ENCODE measurements at regions of chr2 and their contacts with region 1.

Region 1: DNA sequence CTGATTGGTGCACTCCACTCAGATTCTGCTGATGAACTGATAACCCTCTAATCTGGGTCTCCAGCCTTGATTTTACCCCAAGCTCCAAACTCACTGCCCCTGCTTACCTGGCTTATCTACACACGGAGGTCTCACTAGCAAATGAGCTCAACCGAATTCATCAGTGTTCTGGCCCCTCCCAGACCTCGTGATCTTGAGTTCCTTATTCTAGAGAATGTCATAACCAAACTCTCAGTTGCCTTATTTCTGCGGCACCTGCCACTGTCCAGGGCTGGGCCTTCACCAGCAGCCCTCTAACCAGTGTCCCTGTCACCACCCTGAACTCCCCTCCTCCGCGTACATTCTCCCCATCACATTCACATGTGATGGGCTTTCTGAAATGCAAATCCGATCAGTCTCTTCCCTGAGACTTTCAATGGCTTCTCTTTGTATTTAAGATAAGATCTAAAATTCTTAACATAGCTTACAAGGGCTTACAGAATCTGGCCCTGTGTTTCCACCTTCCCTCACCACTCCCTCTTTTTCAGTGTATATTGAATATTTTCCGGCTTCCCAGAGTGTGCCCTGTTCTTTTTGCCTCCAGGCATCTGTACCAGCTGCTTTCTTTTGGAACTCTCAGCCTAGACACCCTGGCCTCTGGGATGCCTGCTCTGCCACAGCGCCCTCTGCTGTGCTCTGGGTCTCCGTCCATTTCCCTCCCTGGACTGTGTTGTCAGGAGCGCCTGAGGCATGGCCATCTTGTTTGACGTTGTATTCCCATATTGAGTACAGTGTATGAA is 31.1 kb downstream of the NAB1 start:
- DNase-seq: peak; percentile 57
- H3K4me3 Mint-ChIP-seq: peak overlapping the region; percentile 8
- H3K27ac Mint-ChIP-seq: peak overlapping the region; percentile 56
- H3K4me1 Mint-ChIP-seq: peaks cover 43% of the 10 kb centered on the region
- H3K27me3 Mint-ChIP-seq: no peaks in the 10 kb centered on the region

Region 2: GRCh38 chr2:190382851-190383250 is 297.2 kb before region 1 on chr2:
- CTCF ChIA-PET with region 1: interaction called, 25 read pairs
- POLR2A ChIA-PET with region 1: no interaction called
- DNase-seq: peak; percentile 30
- H3K4me3 Mint-ChIP-seq: no peak overlapping the region
- H3K27ac Mint-ChIP-seq: no peak overlapping the region
- H3K4me1 Mint-ChIP-seq: no peaks in the 10 kb centered on the region
- H3K27me3 Mint-ChIP-seq: no peaks in the 10 kb centered on the region

Region 3: DNA sequence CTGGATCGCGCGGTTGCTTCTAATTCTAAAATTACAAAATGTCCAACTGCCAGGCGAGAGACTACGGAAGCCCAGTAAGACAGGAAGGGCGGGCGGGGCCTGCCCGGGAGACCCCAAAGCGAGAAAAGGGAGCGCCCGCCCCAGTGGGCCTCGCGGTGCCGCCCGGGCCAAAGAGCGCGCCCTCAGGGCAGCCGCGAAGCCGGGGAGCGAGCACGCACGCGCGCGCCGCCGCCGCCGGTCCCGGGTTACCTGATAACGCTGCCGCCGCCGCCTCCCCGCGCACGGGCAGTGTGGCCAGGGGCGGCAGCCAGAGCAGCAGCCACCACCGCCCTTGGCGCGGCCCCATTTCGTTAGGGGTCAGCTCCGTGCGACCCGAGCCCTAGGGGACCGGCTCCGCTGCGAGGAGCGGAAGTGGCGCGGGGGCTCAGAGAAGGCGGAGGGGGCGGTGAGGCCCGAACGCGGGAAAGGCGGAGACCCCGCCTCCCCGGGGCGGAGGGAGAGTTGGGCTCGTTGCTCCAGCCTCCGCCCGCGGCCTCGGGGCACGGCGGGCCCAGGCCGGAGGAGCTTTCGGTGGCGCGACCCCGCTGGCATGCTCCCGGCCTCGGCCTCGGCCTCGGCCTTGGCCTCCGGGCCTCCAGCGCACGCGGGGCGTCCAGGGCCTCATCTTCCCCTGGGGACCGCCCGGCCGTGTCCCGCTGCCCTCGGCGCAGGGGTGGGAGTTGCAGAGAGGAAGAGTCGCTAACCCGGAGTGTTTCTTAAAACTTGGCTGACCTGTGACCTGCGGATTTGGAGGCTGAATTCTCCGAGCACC is 145.5 kb before region 1 on chr2 and contains the start of gene NEMP2:
- CTCF ChIA-PET with region 1: interaction called, 9 read pairs
- POLR2A ChIA-PET with region 1: interaction called, 24 read pairs
- DNase-seq: peak; percentile 83
- H3K4me3 Mint-ChIP-seq: peak within 1 kb of the TSS; percentile 89
- H3K27ac Mint-ChIP-seq: peak within 1 kb of the TSS; percentile 99
- H3K4me1 Mint-ChIP-seq: peaks cover 55% of the 10 kb centered on the region
- H3K27me3 Mint-ChIP-seq: no peaks in the 10 kb centered on the region
- total RNA-seq, gene NEMP2: 18.9 to 19.1 TPM

Region 4: GRCh38 chr2:190648289-190649034 is 31.5 kb before region 1 on chr2:
- CTCF ChIA-PET with region 1: interaction called, 23 read pairs
- POLR2A ChIA-PET with region 1: interaction called, 8 read pairs
- DNase-seq: peak; percentile 81
- H3K4me3 Mint-ChIP-seq: peak overlapping the region; percentile 73
- H3K27ac Mint-ChIP-seq: peak overlapping the region; percentile 29
- H3K4me1 Mint-ChIP-seq: peaks cover 31% of the 10 kb centered on the region
- H3K27me3 Mint-ChIP-seq: peaks cover 2% of the 10 kb centered on the region

Region 5: DNA sequence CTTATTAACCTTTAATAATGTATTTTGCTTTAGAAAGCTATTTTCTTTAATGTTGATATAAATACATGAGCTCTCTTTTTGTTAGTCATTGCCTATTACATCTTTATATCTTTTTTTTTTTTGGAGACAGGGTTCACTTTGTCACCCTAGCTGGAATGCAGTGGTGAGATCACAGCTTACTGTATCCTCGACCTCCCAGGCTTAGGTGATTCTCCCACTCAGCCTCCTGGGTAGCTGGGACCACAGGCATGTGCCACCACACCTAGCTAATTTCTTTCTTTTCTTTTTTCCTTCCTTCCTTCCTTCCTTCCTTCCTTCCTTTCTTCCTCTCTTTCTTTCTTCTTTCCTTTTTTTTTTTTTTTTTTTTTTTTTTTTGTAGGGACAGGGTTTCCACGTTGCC is 15.8 kb before region 1 on chr2:
- CTCF ChIA-PET with region 1: interaction called, 16 read pairs
- POLR2A ChIA-PET with region 1: interaction called, 6 read pairs
- DNase-seq: no peak
- H3K4me3 Mint-ChIP-seq: no peak overlapping the region
- H3K27ac Mint-ChIP-seq: no peak overlapping the region
- H3K4me1 Mint-ChIP-seq: peaks cover 19% of the 10 kb centered on the region
- H3K27me3 Mint-ChIP-seq: no peaks in the 10 kb centered on the region

Region 6: DNA sequence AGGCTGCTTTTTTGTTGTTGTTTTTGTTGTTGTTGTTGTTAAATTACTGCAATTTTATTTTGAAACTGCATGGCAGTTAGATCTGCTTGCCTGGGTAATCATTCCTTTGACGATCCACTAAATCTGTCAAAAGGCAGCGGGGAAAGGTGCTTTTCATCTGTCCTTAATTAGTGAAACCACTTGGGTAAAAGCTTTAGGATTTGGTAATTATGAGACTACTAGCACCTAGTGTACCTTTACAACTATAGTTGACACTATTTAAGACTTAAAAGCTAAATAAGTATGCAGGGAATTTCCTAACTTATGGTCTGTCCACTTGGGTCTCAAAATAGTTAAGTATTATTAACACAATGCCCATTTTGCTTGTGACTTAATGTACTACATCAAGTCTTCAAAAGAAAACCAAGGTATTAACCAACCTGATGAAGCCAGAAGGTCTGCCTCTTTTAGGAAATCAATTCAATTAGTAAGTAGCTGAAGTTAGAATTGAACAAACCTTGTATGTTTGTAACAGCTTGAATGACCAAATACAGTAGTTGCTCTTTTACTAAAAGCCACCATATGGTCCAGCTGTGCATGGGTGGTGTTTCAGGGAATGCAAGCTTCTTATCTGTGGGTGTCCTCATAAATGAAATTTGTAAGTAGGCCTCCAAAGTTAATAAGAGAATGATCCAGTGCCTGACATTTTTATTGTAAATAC is 13.7 kb after region 1 on chr2:
- CTCF ChIA-PET with region 1: interaction called, 29 read pairs
- POLR2A ChIA-PET with region 1: interaction called, 4 read pairs
- DNase-seq: no peak
- H3K4me3 Mint-ChIP-seq: no peak overlapping the region
- H3K27ac Mint-ChIP-seq: no peak overlapping the region
- H3K4me1 Mint-ChIP-seq: peaks cover 29% of the 10 kb centered on the region
- H3K27me3 Mint-ChIP-seq: no peaks in the 10 kb centered on the region